ENCODE measurements at regions of chr4 and their contacts with region 1.

Region 1: DNA sequence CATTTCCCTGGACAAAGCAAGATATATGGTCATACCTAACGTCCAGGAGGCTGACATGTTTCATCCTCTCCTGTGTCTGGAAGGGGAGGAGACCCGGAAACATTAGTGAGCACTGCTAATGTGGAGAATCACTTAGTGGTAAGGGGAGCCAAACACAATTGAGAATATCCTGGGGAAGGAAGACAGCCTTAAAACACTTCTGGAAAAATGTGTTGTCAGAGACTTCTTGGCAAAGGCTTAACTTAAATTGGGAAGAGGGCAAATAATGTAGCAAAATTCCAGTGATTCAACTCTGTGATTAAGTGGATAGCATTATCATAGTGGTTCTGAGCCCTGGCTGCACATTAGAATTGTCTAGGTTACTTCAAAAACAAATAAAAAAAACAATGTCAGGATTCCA is 39.5 kb downstream of the SPARCL1 start:
- DNase-seq: no peak
- ATAC-seq: peak; percentile 85 to 98 (median 88)
- H3K4me3 ChIP-seq: no peak overlapping the region
- H3K27ac ChIP-seq: peak overlapping the region; percentile 2 to 82 (median 58)
- H3K4me1 ChIP-seq: peaks cover 0 to 50% (median 20%) of the 10 kb centered on the region in 12 donors
- H3K27me3 ChIP-seq: no peaks in the 10 kb centered on the region
- CTCF ChIP-seq: no peak
- POLR2A ChIP-seq: no peak

Region 2: DNA sequence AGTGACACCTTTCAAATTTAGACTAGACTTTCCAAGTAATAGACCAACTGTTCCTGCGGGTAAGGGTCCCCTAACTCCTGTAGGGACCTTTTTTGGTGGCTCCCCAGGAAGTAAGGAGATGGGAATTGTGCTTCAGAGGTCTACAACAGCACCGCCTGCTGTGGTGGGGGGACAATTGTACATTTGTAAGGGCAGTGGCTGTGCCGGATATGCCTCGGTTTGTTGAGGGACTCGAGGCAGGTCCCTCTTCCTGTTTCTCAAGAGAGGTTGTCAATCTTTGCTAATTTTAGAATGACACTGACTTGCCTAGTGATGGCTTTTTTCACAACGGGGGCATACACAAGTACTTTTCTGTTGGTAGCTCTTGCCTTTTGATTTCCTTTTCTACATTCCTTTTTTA is 83.2 kb before region 1 on chr4:
- intact Hi-C with region 1: no loop called
- DNase-seq: no peak
- ATAC-seq: no peak
- H3K4me3 ChIP-seq: peak overlapping the region in 1 of 12 donors; percentile 25
- H3K27ac ChIP-seq: no peak overlapping the region
- H3K4me1 ChIP-seq: peaks cover 0 to 7% (median 0%) of the 10 kb centered on the region in 12 donors
- H3K27me3 ChIP-seq: no peaks in the 10 kb centered on the region
- CTCF ChIP-seq: no peak
- POLR2A ChIP-seq: no peak

Region 3: DNA sequence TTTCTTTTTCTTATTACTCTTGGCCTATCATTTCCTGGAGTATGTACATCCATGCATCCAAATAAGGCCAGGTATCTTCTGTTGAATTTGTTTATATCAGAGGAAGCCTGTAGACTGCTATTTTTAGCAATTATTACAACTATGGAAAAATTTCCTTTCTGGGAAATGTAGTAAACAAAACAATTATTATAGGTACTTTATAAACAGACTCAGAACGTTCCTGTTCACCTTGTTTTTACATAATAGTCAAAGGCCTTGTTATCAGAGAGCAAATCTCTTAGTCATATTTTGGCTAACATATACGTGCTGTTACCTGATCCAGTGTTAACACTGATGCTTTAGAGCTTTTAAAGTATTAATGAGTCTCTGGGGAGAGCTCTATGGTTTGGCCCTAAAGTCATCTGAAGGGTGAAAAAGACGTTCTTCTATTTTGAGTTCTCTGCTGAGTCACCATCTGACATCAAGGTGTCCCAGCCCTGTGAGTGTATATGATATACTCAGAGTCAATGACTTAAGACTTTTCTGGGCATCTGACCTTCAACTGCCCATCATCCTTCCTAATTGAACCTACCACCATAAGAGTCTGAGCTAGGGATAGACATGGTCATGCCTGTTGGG is 32.2 kb after region 1 on chr4:
- intact Hi-C with region 1: loop called in 4 of 10 experiments (anchors 5 kb)
- DNase-seq: no peak
- ATAC-seq: peak; percentile 34 to 65 (median 46)
- H3K4me3 ChIP-seq: peak overlapping the region in 5 of 12 donors; percentile 2 to 61 (median 21)
- H3K27ac ChIP-seq: peak overlapping the region; percentile 32 to 91 (median 84)
- H3K4me1 ChIP-seq: peaks cover 0 to 81% (median 52%) of the 10 kb centered on the region in 12 donors
- H3K27me3 ChIP-seq: no peaks in the 10 kb centered on the region
- CTCF ChIP-seq: no peak
- POLR2A ChIP-seq: peak in 1 of 2 donors; percentile 16

Region 4: GRCh38 chr4:87530868-87531267 is 41.2 kb after region 1 on chr4:
- intact Hi-C with region 1: loop called in 5 of 10 experiments (anchors 2 to 5 kb)
- DNase-seq: peak; percentile 64 to 86 (median 78)
- ATAC-seq: peak; percentile 90 to 96 (median 92)
- H3K4me3 ChIP-seq: peak overlapping the region in 9 of 12 donors; percentile 49 to 64 (median 61)
- H3K27ac ChIP-seq: peak overlapping the region; percentile 74 to 93 (median 84)
- H3K4me1 ChIP-seq: peaks cover 0 to 37% (median 24%) of the 10 kb centered on the region in 12 donors
- H3K27me3 ChIP-seq: no peaks in the 10 kb centered on the region
- CTCF ChIP-seq: no peak
- POLR2A ChIP-seq: peak in 1 of 2 donors; percentile 56

Region 5: GRCh38 chr4:87738483-87738882 is 248.8 kb after region 1 on chr4:
- intact Hi-C with region 1: no loop called
- DNase-seq: no peak
- ATAC-seq: no peak
- H3K4me3 ChIP-seq: no peak overlapping the region
- H3K27ac ChIP-seq: no peak overlapping the region
- H3K4me1 ChIP-seq: no peaks in the 10 kb centered on the region
- H3K27me3 ChIP-seq: no peaks in the 10 kb centered on the region
- CTCF ChIP-seq: no peak
- POLR2A ChIP-seq: no peak

Region 6: GRCh38 chr4:89336818-89337420 is 1847.2 kb after region 1 on chr4:
- intact Hi-C with region 1: no loop called
- DNase-seq: no peak
- ATAC-seq: no peak
- H3K4me3 ChIP-seq: no peak overlapping the region
- H3K27ac ChIP-seq: no peak overlapping the region
- H3K4me1 ChIP-seq: peaks cover 0 to 20% (median 0%) of the 10 kb centered on the region in 12 donors
- H3K27me3 ChIP-seq: no peaks in the 10 kb centered on the region
- CTCF ChIP-seq: no peak
- POLR2A ChIP-seq: no peak

Measured in heart left ventricle (tissue), 16 donors.